ENCODE measurements at regions of chr10 and their contacts with region 1.

Region 1: GRCh38 chr10:20858292-20859124 is 38.6 kb downstream of the NEBL start:
- DNase-seq: peak in 1 of 2 experiments; percentile 55
- H3K4me3 ChIP-seq: no peak overlapping the region
- H3K27ac ChIP-seq: no peak overlapping the region
- H3K4me1 ChIP-seq: no peaks in the 10 kb centered on the region
- H3K27me3 ChIP-seq: no peaks in the 10 kb centered on the region
- CTCF ChIP-seq: peak; percentile 73

Region 2: DNA sequence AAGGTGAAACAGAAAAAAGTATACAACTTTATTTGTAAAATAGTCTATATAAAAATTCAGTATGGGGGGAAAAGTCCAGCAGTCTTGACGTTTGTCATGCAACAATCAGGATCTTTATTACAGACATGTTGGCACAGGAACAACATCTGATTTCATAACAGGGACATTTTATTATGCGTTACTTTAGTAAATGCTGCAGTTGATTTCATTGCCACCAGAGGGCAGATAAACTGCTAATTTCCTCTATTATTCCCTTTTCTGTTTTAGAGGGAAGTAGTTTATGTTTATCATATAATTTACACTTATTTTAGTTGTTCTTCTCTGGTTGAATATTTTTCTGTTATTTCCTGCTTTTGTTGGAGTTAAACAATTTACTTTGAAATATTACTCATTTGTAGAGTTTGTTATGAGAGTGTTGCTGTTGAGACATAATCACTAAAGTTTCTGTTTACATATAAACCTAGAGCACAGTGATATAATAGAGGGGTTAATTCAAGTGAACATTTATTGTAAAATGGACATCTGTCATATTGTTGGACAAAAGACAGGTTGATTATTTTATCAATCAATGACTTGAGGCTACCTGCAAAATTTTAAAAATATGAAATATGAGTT is 1039.0 kb before region 1 on chr10:
- CTCF ChIA-PET with region 1: no interaction called
- POLR2A ChIA-PET with region 1: no interaction called
- intact Hi-C with region 1: loop called (anchors 2 kb)
- DNase-seq: no peak
- H3K4me3 ChIP-seq: no peak overlapping the region
- H3K27ac ChIP-seq: no peak overlapping the region
- H3K4me1 ChIP-seq: no peaks in the 10 kb centered on the region
- H3K27me3 ChIP-seq: no peaks in the 10 kb centered on the region
- CTCF ChIP-seq: peak; percentile 69

Region 3: DNA sequence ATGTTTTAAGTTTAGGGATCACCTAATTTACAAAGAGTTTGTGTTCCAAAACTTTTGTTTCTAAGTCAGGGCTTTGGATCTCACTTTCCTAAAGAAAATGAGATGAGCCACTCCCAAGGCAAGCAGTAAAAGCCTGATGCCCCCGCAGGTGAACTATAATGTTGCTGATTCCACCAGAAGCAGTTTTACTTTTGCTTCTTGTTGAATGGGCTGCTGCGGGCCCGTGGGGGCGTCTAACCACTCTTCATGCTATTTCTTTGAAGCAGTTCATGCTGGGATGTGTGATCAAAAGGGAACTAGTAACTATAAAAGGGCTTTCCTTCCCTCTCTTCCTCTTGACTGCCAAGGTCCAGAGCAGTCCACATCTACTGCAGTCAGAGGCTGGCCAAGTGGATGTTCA is 157.3 kb after region 1 on chr10:
- CTCF ChIA-PET with region 1: no interaction called
- POLR2A ChIA-PET with region 1: no interaction called
- intact Hi-C with region 1: loop called (anchors 5 kb)
- DNase-seq: no peak
- H3K4me3 ChIP-seq: no peak overlapping the region
- H3K27ac ChIP-seq: no peak overlapping the region
- H3K4me1 ChIP-seq: no peaks in the 10 kb centered on the region
- H3K27me3 ChIP-seq: no peaks in the 10 kb centered on the region
- CTCF ChIP-seq: no peak

Region 4: DNA sequence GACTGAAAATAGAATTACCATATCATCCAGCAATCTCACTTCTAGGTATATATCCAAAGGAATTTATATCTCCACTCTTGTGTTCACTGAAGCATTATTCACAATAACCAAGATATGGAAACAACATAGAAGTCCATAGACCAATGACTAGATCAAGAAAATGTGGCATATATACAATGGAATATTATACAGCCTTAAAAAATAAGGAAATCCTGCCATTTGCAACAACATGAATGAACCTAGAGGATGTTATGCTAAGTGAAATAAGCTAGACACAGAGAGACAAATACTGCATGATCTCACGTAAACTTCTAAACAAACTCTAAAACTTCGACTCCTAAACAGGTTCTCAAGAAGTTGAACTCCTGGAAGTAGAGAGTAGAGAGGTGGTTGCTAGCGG is 412.5 kb after region 1 on chr10:
- CTCF ChIA-PET with region 1: no interaction called
- POLR2A ChIA-PET with region 1: no interaction called
- intact Hi-C with region 1: loop called (anchors 1 kb)
- DNase-seq: no peak
- H3K4me3 ChIP-seq: no peak overlapping the region
- H3K27ac ChIP-seq: no peak overlapping the region
- H3K4me1 ChIP-seq: peaks cover 22% of the 10 kb centered on the region
- H3K27me3 ChIP-seq: no peaks in the 10 kb centered on the region
- CTCF ChIP-seq: no peak